ENCODE measurements at regions of chr5 and their contacts with region 1.

Region 1: DNA sequence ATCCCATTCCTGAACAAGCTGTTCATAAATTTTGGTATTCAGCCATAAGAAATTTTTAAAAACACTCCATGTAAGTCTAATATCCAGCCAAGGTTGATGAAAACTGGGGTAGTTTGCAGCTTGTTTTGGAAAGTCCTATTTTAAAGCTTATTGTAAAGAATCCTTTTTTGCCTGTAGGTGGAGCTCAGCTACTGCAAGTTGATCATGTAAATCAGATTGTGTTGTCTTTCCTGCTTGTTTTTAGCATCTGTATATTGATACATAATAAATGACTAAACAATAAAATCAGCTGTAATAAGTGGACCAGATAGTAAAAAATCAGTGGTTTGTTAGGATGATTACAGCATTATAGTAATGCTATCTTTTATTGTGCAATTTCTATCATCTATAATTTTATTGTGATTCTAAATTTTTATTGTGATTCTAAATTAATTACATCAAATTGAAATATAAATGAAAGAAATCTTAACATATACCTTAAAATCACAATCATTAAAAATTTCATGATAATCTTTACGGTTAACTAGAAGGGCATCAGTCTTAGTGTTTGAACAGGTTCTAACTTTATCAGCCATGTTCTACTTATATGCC is 42.4 kb downstream of the CWC27 start:
- DNase-seq: peak; percentile 9 to 57
- H3K4me3 ChIP-seq: no peak overlapping the region
- H3K4me1 ChIP-seq: no peaks in the 10 kb centered on the region
- H3K27me3 ChIP-seq: no peaks in the 10 kb centered on the region

Region 2: GRCh38 chr5:65035211-65036206 is 224.4 kb after region 1 on chr5:
- in situ Hi-C with region 1: loop called (anchors 25 kb)
- DNase-seq: peak; percentile 80 to 92
- H3K4me3 ChIP-seq: peak overlapping the region; percentile 40
- H3K4me1 ChIP-seq: peaks cover 8% of the 10 kb centered on the region
- H3K27me3 ChIP-seq: no peaks in the 10 kb centered on the region